Posterior vena cava (tissue), 2 donors: ENCODE measurements at regions of chr5 and their contacts with region 1.

Region 1: DNA sequence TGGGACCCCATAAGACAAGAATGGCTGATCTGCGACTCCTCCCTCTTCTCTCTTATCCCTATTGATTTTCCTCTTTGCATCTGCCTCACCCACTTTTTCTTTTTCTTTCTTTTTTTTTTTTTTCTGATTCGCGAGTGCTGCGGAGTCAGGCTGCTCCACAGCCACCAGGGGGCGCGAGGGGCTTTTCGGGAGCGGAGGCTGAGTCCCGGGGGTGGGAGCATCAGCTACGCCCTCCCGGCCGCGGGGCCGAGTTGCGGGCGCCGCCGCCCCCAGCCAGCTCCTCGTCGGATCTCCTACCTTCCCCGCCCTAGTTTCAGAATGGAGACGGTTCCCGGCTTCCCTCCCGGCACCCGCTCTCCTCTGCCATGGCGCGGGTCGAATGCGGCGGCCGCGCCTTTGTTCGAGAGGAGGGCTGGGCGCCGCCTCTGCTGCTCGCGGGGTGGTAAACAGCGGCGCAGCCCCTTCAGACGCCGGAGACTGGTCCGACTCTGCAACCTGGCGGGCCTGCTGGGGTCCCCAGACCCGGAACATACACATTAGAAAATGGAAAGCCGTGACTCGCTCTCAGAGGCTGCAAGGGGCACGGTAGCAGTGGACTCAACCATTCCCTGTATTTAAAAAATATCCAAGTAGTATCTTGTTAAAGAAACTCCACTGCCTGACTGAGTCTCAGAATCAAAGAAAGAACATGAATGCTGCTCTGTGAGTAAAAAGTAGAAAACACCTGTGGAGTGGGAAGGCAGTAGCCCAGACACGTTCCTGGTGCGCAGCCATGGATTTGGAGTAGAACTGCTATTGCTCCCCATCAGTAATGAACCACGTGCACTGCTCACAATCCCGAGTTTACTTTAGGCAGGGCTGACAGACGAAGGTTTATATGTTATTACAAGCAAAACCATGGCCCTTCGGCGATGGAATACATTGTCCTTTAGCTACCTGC is 55.7 kb downstream of the DPYSL3 start:
- DNase-seq: peak; percentile 97

Region 2: GRCh38 chr5:147382776-147383175 is 71.4 kb before region 1 on chr5:
- intact Hi-C with region 1: no loop called
- DNase-seq: no peak

Region 3: GRCh38 chr5:147509710-147510651 is 55.8 kb after region 1 on chr5 and contains the start of gene DPYSL3:
- intact Hi-C with region 1: loop called in 1 of 2 experiments (anchors 5 kb)
- DNase-seq: peak; percentile 95
- total RNA-seq, gene DPYSL3: 401 to 418 TPM

Region 4: GRCh38 chr5:147552897-147553296 is 98.8 kb after region 1 on chr5:
- intact Hi-C with region 1: loop called (anchors 1 to 5 kb)
- DNase-seq: no peak